Activated T-helper 1 cell treated with anti-CD3 and anti-CD28 coated beads, Interleukin-12 subunit alpha, Interleukin-12 subunit beta, Interleukin-2, Interleukin-4 antibody, amounts not matched to agents 30 ng/mL and 10 ng/mL and 1 ng/mL, durations not matched to agents 14 hours and 24 hours and 36 hours (primary cell): ENCODE measurements at regions of chr13 and their contacts with region 1.

Region 1: GRCh38 chr13:39684531-39685137 is 29.2 kb downstream of the COG6 start:
- DNase-seq: no peak
- H3K4me3 Mint-ChIP-seq: no peak overlapping the region
- H3K27ac Mint-ChIP-seq: no peak overlapping the region
- H3K4me1 Mint-ChIP-seq: peaks cover 25% of the 10 kb centered on the region
- H3K27me3 Mint-ChIP-seq: no peaks in the 10 kb centered on the region

Region 2: GRCh38 chr13:39347926-39348901 is 336.4 kb before region 1 on chr13:
- intact Hi-C with region 1: no loop called
- DNase-seq: no peak
- H3K4me3 Mint-ChIP-seq: no peak overlapping the region
- H3K27ac Mint-ChIP-seq: no peak overlapping the region
- H3K4me1 Mint-ChIP-seq: no peaks in the 10 kb centered on the region
- H3K27me3 Mint-ChIP-seq: peaks cover 4% of the 10 kb centered on the region

Region 3: DNA sequence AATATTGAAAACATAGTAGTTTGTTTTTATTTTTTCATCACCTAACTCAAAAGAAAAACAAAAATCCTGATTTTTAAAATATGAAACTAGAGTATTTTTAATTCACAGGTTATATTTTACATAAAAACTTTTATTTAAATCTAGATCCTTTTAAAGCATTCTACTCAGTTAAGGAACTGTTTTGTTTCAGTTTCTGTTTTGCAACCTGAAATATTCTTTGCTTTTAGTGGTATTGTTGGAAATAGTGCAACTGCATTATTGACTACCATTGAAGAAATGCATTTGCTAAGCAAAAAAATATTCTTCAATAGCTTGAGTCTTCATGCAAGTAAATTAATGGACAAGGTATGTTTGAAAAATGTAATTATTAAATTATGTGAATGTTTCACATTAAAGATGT is 14.6 kb after region 1 on chr13:
- intact Hi-C with region 1: loop called (anchors 1 kb)
- DNase-seq: no peak
- H3K4me3 Mint-ChIP-seq: no peak overlapping the region
- H3K27ac Mint-ChIP-seq: no peak overlapping the region
- H3K4me1 Mint-ChIP-seq: peaks cover 14% of the 10 kb centered on the region
- H3K27me3 Mint-ChIP-seq: no peaks in the 10 kb centered on the region

Region 4: DNA sequence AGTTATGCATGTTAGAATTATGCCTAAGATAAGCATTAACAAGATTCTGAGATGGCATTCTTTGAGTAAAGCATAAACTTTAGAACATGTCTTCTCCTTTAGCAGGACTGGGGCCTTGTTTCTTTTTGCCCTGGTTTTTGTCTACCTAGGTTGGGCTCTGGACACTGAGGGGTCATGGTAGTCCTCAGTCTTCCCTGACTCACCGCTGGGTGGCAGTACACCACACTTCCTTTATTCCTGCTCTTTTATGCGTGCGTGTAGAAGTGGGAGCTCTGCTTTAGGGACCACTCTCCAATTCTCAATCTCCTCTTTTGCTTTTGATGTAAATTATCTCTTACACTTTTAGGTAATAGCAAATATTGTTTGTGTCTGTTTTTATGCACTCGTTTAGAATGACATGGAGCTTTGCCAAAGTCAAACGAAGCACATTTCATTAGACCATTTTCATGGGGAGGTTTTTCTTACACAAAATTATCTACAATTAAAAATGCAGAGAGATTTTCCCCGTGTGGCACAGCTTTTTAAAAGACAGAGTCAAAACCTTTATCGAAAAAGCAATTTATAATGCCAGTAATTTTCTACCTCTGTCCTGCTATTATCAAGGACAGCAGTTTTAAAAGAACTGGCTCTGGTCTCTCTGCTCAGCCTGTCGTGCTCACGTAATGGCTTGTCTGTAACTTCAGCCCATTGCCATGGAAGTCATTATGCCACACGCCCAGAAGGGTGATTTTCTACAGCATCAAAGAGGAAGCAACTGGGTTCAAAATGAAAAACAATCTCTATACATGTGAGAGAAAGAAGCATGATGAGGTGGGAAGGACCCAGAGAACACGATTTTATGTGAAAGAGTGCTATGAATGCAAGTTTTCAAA is 384.8 kb after region 1 on chr13:
- intact Hi-C with region 1: loop called (anchors 10 kb)
- DNase-seq: peak; percentile 45
- H3K4me3 Mint-ChIP-seq: no peak overlapping the region
- H3K27ac Mint-ChIP-seq: no peak overlapping the region
- H3K4me1 Mint-ChIP-seq: peaks cover 37% of the 10 kb centered on the region
- H3K27me3 Mint-ChIP-seq: no peaks in the 10 kb centered on the region

Region 5: GRCh38 chr13:40388617-40389016 is 704.0 kb after region 1 on chr13:
- intact Hi-C with region 1: loop called (anchors 5 kb)
- DNase-seq: peak; percentile 79
- H3K4me3 Mint-ChIP-seq: peak overlapping the region; percentile 76
- H3K27ac Mint-ChIP-seq: peak overlapping the region; percentile 96
- H3K4me1 Mint-ChIP-seq: peaks cover 56% of the 10 kb centered on the region
- H3K27me3 Mint-ChIP-seq: no peaks in the 10 kb centered on the region

Region 6: GRCh38 chr13:40676007-40676406 is 991.4 kb after region 1 on chr13:
- intact Hi-C with region 1: no loop called
- DNase-seq: no peak
- H3K4me3 Mint-ChIP-seq: no peak overlapping the region
- H3K27ac Mint-ChIP-seq: no peak overlapping the region
- H3K4me1 Mint-ChIP-seq: peaks cover 16% of the 10 kb centered on the region
- H3K27me3 Mint-ChIP-seq: no peaks in the 10 kb centered on the region

Region 7: DNA sequence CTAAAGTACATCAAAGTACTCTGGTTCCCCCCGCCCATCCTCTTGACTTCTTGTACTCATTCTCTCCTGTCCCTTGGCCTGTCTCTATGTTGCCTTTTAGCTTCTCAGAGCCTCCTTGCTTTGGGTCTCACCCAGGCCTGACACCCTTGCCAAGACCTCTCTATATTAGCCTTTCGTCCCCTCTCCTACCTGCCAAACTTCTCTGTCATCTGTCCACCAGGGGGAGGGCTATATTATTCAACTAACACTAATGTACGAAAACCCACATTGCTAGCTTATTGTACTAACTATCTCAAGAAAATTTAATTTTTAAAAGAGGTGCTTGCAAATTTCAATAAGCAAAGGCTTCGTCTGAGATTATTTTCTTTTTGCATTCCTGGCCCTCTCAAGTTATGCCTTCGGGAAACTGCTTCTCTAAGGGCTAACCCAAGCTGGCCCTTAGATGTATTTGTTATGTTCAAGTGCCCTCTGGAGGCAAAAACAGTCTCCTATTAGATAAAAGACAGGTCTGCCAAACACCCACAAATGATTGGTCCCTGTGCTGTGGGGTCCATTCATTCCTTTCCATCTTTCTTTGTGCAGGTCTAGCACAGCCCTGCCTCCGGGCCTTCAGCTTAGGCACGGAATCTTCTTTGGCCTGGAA is 1092.7 kb after region 1 on chr13:
- intact Hi-C with region 1: loop called (anchors 2 kb)
- DNase-seq: peak; percentile 28
- H3K4me3 Mint-ChIP-seq: peak overlapping the region; percentile 76
- H3K27ac Mint-ChIP-seq: peak overlapping the region; percentile 99
- H3K4me1 Mint-ChIP-seq: peaks cover 33% of the 10 kb centered on the region
- H3K27me3 Mint-ChIP-seq: no peaks in the 10 kb centered on the region